ENCODE measurements at regions of chr10 and their contacts with region 1.

Region 1: GRCh38 chr10:112471878-112472487 is 25.0 kb downstream of the VTI1A start:
- DNase-seq: no peak
- H3K4me3 ChIP-seq: no peak overlapping the region
- CTCF ChIP-seq: peak; percentile 38

Region 2: GRCh38 chr10:112314822-112315474 is 157.0 kb before region 1 on chr10:
- CTCF ChIA-PET with region 1: interaction called, 15 read pairs
- POLR2A ChIA-PET with region 1: no interaction called
- DNase-seq: no peak
- H3K4me3 ChIP-seq: no peak overlapping the region
- CTCF ChIP-seq: peak; percentile 90

Region 3: GRCh38 chr10:112446855-112447711 is 24.9 kb before region 1 on chr10 and contains the starts of genes VTI1A and ZDHHC6:
- CTCF ChIA-PET with region 1: interaction called, 13 read pairs
- POLR2A ChIA-PET with region 1: no interaction called
- DNase-seq: no peak
- H3K4me3 ChIP-seq: peak within 1 kb of the TSS; percentile 94
- CTCF ChIP-seq: peak; percentile 46

Region 4: GRCh38 chr10:112490545-112490944 is 18.6 kb after region 1 on chr10:
- CTCF ChIA-PET with region 1: interaction called, 17 read pairs
- POLR2A ChIA-PET with region 1: no interaction called
- DNase-seq: no peak
- H3K4me3 ChIP-seq: no peak overlapping the region
- CTCF ChIP-seq: no peak

Region 5: GRCh38 chr10:113385021-113385999 is 913.3 kb after region 1 on chr10:
- CTCF ChIA-PET with region 1: interaction called, 128 read pairs
- POLR2A ChIA-PET with region 1: no interaction called
- DNase-seq: peak; percentile 59
- H3K4me3 ChIP-seq: no peak overlapping the region
- CTCF ChIP-seq: peak; percentile 88

Region 6: DNA sequence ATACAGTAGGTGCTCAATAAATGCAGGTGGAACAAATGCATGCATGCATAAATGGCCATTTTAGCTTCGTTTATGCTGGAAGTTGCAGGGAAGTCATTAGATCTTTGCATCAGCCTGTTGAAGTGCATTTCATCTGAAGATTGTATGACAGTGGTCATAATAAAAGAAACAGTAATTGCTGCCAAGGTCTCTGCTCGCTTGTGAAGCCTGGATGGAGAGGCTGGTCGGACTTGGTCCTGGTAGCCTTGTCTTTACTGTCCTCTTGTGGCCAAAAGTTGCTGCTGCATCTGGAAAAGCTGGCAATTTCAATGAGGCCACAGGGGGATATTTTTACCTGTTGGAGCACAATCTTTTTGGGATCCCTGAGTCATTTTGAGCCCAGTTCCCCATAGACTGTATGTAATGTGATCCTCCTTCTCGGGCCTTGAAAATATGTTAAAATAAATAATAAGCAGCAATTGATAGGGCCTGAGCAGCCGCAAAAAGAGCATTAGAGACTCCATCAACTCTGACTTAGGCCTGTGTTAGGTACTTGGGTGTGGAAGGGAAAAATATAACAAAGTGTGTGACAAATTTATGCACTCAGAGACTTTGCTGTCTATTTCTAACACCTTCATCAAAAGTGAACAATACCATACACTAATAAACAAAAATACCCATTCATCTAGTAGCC is 1049.3 kb after region 1 on chr10:
- CTCF ChIA-PET with region 1: interaction called, 44 read pairs
- POLR2A ChIA-PET with region 1: no interaction called
- DNase-seq: peak; percentile 31
- H3K4me3 ChIP-seq: no peak overlapping the region
- CTCF ChIP-seq: peak; percentile 93

Measured in AG04449 (cell line).